Heart right ventricle (tissue), 16 donors: ENCODE measurements at regions of chr1 and their contacts with region 1.

Region 1: GRCh38 chr1:229430761-229431283 is 3.1 kb downstream of the ACTA1 start:
- DNase-seq: peak; percentile 73
- ATAC-seq: peak; percentile 10 to 78 (median 36)
- H3K4me3 ChIP-seq: peak overlapping the region in 6 of 10 donors; percentile 29 to 65 (median 59)
- H3K27ac ChIP-seq: peak overlapping the region in 5 of 10 donors; percentile 20 to 99 (median 92)
- H3K4me1 ChIP-seq: peaks cover 0 to 30% (median 24%) of the 10 kb centered on the region in 9 donors
- H3K27me3 ChIP-seq: peaks cover 15 to 100% (median 79%) of the 10 kb centered on the region in 7 donors
- CTCF ChIP-seq: peak in 1 of 9 donors; percentile 16

Region 2: DNA sequence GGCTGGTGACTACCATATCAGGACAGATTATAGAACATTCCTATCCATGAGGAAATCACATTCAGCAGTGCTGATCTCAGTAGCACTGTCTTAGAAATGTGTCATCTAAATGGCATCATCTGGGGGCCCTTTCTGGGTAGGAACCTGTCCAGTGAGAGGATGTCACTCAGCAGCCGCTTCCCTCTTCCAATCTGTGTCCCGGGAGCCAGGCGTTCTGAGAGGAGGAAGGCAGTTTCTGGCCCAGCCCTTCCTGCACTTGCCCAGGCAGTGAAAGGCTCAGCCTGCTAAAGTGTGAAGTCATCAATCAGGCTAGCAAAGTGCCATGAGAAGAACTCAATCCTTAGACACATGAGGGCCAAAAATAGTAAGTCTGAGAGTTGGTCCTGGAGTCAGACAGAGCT is 134.3 kb before region 1 on chr1:
- intact Hi-C with region 1: loop called in 1 of 10 experiments (anchors 10 kb)
- DNase-seq: peak in 1 of 2 donors; percentile 38
- ATAC-seq: peak in 7 of 8 donors; percentile 64 to 92 (median 85)
- H3K4me3 ChIP-seq: no peak overlapping the region
- H3K27ac ChIP-seq: peak overlapping the region in 7 of 10 donors; percentile 11 to 61 (median 38)
- H3K4me1 ChIP-seq: peaks cover 0 to 17% (median 5%) of the 10 kb centered on the region in 9 donors
- H3K27me3 ChIP-seq: no peaks in the 10 kb centered on the region
- CTCF ChIP-seq: no peak

Region 3: DNA sequence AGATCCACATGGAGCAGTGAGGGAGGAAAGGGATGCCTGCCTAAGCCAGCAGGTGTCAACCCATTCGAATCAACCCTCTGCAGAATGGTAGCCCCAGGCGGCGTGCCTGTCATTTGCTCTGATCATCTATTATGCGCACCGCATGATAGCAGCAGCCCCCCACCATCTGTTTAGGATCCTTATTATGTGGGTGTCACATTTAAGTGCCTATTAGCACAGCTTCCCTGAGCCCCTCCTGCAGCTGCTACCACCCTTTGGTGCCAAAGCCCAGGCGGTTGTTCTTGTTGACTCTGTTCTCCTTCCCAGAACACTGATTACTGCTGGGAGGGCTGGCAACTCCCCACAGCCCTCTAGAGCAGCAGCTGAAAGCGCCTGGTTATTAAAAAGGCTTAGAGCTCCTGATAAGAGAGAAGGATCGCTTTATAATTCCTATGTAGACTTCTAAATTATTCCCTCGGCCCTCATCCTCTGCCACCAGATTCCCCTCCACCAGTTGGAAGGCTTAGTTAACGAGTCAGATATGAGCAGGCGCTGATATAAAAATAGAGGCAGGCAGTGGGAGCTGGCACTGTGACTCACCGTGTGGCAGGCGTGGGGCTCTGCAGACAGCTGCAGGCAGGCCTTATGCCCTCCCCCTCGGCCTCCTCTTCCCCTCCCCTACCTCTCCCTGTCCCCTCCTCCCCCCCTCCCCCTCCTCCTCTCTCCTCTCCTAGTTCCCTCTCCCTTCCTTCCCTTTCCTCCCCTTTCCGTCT is 20.0 kb before region 1 on chr1:
- intact Hi-C with region 1: loop called in 1 of 10 experiments (anchors 2 kb)
- DNase-seq: peak; percentile 68 to 82
- ATAC-seq: peak; percentile 64 to 91 (median 71)
- H3K4me3 ChIP-seq: peak overlapping the region in 5 of 10 donors; percentile 21 to 41 (median 28)
- H3K27ac ChIP-seq: peak overlapping the region; percentile 58 to 98 (median 82)
- H3K4me1 ChIP-seq: peaks cover 7 to 57% (median 43%) of the 10 kb centered on the region in 9 donors
- H3K27me3 ChIP-seq: peaks cover 0 to 56% (median 35%) of the 10 kb centered on the region in 7 donors
- CTCF ChIP-seq: peak in 2 of 9 donors; percentile 11 to 12